ENCODE measurements at regions of chr19 and their contacts with region 1.

Region 1: GRCh38 chr19:35716801-35717666 is 769 bp upstream of the KMT2B start:
- DNase-seq: peak; percentile 96
- H3K4me3 Mint-ChIP-seq: peak overlapping the region; percentile 92
- H3K27ac Mint-ChIP-seq: peak overlapping the region; percentile 100
- H3K4me1 Mint-ChIP-seq: peaks cover 32% of the 10 kb centered on the region
- H3K27me3 Mint-ChIP-seq: no peaks in the 10 kb centered on the region

Region 2: GRCh38 chr19:35347171-35347929 is 369.7 kb before region 1 on chr19 and contains the start of gene FFAR1:
- CTCF ChIA-PET with region 1: no interaction called
- intact Hi-C with region 1: no loop called
- DNase-seq: peak; percentile 91
- H3K4me3 Mint-ChIP-seq: peak within 1 kb of the TSS; percentile 46
- H3K27ac Mint-ChIP-seq: peak within 1 kb of the TSS; percentile 98
- H3K4me1 Mint-ChIP-seq: peaks cover 32% of the 10 kb centered on the region
- H3K27me3 Mint-ChIP-seq: peaks cover 2% of the 10 kb centered on the region
- total RNA-seq, gene FFAR1: 0.10 TPM in 1 of 2 experiments, not detected in the other

Region 3: GRCh38 chr19:35545001-35545911 is 171.8 kb before region 1 on chr19 and contains the start of gene TMEM147:
- CTCF ChIA-PET with region 1: interaction called, 4 read pairs
- intact Hi-C with region 1: loop called (anchors 1 kb)
- DNase-seq: peak; percentile 85
- H3K4me3 Mint-ChIP-seq: peak within 1 kb of the TSS; percentile 87
- H3K27ac Mint-ChIP-seq: peak within 1 kb of the TSS; percentile 90
- H3K4me1 Mint-ChIP-seq: peaks cover 38% of the 10 kb centered on the region
- H3K27me3 Mint-ChIP-seq: no peaks in the 10 kb centered on the region
- total RNA-seq, gene TMEM147: 63.1 to 63.4 TPM

Region 4: DNA sequence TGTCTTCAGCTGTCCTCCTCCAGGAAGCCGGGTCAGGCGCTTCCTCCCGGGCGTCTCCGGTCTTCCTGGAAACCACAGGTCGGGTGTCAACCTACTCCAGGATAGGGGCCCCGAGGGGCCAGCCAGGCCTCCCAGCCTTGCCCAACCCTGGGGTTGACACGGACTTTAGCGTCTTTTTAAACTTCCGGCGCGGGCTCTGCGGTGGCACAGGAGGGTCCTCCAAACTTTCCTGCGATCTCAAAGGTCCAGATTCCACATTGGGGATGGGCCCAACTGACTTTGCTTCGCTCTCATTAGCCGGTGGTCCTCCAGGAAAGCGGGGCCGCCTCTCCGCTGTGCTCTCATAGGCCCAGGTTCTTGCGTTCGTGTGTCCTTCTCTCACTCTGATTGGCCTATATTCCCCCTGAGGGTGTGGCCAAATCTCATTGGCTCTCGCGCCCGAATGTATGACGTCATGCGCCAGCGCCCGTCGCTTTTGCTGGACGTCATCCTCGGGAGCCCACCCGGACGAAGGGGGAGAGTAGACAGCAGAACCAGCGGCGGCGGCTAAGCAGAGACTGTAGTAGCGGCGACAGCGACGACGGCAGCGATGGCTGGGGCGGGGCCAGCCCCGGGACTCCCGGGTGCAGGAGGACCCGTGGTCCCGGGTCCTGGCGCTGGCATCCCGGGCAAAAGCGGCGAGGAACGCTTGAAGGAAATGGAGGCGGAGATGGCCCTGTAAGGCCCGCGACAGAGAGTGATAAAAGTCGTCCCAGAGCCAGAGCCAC is 88.3 kb before region 1 on chr19 and contains the start of gene RBM42:
- CTCF ChIA-PET with region 1: no interaction called
- intact Hi-C with region 1: no loop called
- DNase-seq: peak; percentile 97
- H3K4me3 Mint-ChIP-seq: peak within 1 kb of the TSS; percentile 100
- H3K27ac Mint-ChIP-seq: peak within 1 kb of the TSS; percentile 95
- H3K4me1 Mint-ChIP-seq: peaks cover 19% of the 10 kb centered on the region
- H3K27me3 Mint-ChIP-seq: no peaks in the 10 kb centered on the region
- total RNA-seq, gene RBM42: 64.2 to 66.2 TPM

Region 5: DNA sequence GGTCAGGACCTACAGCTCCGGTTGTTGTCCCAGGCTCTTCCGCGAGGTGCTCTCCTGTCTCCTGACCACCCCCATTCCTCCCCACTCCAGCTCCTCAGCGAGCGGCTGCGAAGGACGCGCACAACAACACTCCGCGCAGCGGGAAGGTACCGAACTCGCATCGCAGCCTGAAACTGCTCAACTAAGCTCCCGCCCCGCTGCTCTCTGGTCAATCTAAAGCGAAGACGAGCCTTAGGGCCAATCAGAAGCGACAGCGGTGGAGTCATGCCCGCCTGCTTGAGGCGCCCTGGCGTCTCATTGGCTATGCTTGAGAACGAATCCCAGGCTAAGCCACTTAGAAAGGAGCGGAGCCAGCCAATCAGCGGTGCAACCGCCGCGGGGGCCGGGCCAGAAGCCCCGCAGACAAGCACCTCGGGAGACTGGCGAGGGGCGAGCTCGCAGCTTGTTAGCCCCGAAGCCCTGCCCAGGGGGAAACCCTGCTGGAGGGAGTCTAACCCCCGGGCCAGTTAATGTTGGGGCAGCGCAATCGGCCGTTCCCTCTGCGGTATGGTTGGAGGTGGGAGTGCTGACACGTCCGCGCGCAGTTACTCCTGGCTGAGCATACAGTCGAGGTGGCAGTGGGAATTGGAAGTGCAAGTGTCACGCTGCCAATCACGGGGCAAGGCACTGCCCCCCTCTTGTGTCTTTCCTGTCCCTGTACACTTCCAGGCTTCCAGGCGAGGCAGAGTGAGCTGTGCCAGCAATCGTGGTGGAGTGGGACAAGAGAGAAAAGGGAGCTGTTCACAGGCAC is 14.6 kb before region 1 on chr19:
- CTCF ChIA-PET with region 1: interaction called, 120 read pairs
- intact Hi-C with region 1: loop called (anchors 1 kb)
- DNase-seq: peak; percentile 98
- H3K4me3 Mint-ChIP-seq: peak overlapping the region; percentile 92
- H3K27ac Mint-ChIP-seq: peak overlapping the region; percentile 95
- H3K4me1 Mint-ChIP-seq: peaks cover 10% of the 10 kb centered on the region
- H3K27me3 Mint-ChIP-seq: no peaks in the 10 kb centered on the region

Region 6: DNA sequence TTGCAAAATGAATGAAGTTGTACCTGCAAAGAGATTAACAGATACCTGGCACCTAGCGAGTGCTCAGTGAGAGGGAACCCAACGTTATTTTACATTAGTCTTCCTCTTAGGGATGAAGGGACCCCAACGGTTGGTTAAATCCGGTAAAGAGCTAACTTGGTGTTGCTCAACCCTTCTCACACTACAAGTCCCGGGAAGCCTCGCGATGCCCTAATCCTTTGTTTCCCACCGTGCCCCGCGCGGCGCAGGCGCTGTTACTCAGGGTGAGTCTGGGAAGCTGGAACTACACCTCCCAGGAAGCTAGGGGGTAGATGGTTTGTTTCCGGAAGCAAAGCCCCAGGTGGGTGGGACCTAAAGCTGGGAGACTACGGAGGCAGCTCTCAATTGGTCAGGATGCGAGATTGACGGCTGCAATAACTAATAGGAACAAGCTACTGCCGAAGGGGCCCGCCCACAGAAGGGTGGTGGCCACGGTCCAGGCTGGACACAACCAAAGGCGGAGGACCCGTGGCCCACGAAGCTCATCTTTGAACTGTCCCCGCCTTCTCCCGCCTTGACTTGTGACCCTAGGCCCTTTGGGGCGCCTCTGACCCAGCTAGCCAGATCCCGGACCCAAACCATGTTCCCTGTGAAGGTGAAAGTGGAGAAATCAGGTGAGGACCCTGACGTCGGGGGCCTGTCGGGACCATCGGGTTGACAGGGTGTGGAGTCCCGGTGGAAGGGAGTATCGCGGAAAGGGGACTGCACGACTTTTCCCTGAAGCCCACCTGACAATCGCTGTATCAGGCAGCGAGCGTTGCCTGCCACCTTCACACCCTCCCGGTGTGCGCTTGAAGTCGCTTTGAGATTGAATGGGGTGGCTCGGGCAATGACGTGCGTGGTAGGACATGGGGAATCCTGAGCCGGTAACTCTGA is 31.3 kb after region 1 on chr19 and contains the start of gene LIN37:
- CTCF ChIA-PET with region 1: no interaction called
- intact Hi-C with region 1: loop called (anchors 1 kb)
- DNase-seq: peak; percentile 100
- H3K4me3 Mint-ChIP-seq: peak within 1 kb of the TSS; percentile 98
- H3K27ac Mint-ChIP-seq: peak within 1 kb of the TSS; percentile 92
- H3K4me1 Mint-ChIP-seq: peaks cover 44% of the 10 kb centered on the region
- H3K27me3 Mint-ChIP-seq: no peaks in the 10 kb centered on the region
- total RNA-seq, gene LIN37: 5.7 to 9.7 TPM

Region 7: DNA sequence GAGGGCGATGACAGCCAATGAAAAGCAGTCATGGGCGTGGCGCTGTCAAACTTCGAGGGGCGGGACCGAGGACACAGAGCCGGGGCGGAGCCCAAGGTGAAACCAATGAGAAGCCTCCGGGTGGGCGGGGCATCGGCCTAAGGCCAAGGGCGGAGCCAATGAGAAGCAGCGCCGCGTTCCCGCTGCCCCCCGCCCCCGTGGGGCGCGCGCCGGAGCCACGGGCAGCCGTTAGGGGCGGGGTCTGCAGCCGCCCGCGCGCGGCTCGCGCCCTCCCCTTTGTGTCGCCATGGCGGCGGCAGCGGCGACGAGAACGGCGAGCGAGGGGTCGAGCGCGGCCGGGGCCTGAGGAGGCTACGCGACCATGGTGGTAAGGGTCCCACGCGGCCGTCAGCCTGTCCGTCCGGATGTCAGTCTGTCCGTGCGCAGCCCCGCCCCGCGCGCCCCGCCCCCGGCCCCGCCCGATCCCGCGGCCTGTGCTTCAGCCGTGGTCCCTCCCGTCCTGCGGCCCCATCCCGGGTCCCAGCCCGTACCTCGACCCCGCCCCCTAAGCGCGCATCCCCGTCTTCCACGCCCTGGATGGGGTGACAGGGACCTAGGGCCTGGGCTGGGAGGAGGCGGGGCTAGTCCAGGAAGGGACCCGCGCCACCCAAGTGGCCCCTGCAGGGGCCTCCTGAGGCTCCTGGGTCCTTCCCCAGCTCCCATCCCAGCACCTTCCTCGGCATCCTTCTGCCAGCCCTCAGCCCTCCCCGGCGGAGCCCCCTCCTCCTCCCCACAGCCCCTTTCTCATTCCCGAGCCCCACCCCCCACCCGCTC is 58.5 kb after region 1 on chr19 and contains the start of gene ARHGAP33:
- CTCF ChIA-PET with region 1: no interaction called
- intact Hi-C with region 1: loop called (anchors 1 kb)
- DNase-seq: peak; percentile 100
- H3K4me3 Mint-ChIP-seq: peak within 1 kb of the TSS; percentile 78
- H3K27ac Mint-ChIP-seq: no peak within 1 kb of the TSS
- H3K4me1 Mint-ChIP-seq: peaks cover 18% of the 10 kb centered on the region
- H3K27me3 Mint-ChIP-seq: no peaks in the 10 kb centered on the region
- total RNA-seq, gene ARHGAP33: 49.5 to 61.6 TPM

Region 8: GRCh38 chr19:36014029-36014924 is 297.2 kb after region 1 on chr19 and contains the start of gene ALKBH6:
- CTCF ChIA-PET with region 1: no interaction called
- intact Hi-C with region 1: loop called (anchors 1 kb)
- DNase-seq: peak; percentile 100
- H3K4me3 Mint-ChIP-seq: peak within 1 kb of the TSS; percentile 97
- H3K27ac Mint-ChIP-seq: peak within 1 kb of the TSS; percentile 94
- H3K4me1 Mint-ChIP-seq: peaks cover 27% of the 10 kb centered on the region
- H3K27me3 Mint-ChIP-seq: no peaks in the 10 kb centered on the region
- total RNA-seq, gene ALKBH6: 36.9 to 37.8 TPM

Region 9: DNA sequence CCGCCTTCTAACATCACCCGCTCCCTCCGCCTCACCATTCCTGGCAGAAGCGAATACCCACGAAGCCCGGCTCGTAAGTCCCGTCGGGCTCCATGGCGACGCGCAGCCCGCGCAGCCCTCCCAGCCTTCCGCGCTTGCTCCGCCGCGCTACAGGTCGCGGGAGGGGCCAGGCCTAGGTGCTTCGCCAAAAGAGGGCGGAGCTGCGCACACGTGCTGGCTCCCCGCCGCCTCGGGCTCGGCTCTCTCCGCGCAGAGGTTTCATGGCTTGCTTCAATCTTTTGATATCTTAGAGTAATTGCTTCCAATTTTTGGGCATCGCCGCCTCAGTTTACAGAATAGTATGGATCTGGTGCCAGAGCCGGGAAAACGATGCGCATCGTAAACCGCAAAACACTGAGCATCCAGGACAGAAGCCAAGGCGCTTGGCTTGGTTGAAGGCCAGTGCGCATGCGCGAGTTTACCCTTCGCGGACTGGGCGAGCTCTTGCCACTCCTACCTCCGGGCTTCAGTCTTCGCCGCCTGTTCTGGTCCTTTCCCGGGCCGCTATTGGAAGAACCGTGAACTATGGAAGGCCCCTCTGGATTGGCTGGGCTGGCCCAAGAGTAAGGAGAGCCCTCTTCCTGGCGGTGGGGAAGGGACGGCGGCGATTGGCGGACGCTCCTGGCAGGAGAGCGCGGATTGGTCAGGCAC is 397.9 kb after region 1 on chr19 and contains the start of gene POLR2I:
- CTCF ChIA-PET with region 1: no interaction called
- intact Hi-C with region 1: loop called (anchors 10 kb)
- DNase-seq: peak; percentile 99
- H3K4me3 Mint-ChIP-seq: peak within 1 kb of the TSS; percentile 99
- H3K27ac Mint-ChIP-seq: peak within 1 kb of the TSS; percentile 91
- H3K4me1 Mint-ChIP-seq: peaks cover 31% of the 10 kb centered on the region
- H3K27me3 Mint-ChIP-seq: no peaks in the 10 kb centered on the region
- total RNA-seq, gene POLR2I: 86.8 to 87.4 TPM

Measured in activated naive CD4-positive, alpha-beta T cell treated with anti-CD3 and anti-CD28 coated beads for 36 hours (primary cell).